ENCODE measurements at regions of chr1 and their contacts with region 1.

Region 1: GRCh38 chr1:245337829-245338484 is 183.2 kb downstream of the KIF26B start:
- DNase-seq: no peak
- H3K4me3 ChIP-seq: no peak overlapping the region
- H3K27ac ChIP-seq: no peak overlapping the region
- H3K4me1 ChIP-seq: no peaks in the 10 kb centered on the region
- H3K27me3 ChIP-seq: no peaks in the 10 kb centered on the region
- CTCF ChIP-seq: no peak

Region 2: DNA sequence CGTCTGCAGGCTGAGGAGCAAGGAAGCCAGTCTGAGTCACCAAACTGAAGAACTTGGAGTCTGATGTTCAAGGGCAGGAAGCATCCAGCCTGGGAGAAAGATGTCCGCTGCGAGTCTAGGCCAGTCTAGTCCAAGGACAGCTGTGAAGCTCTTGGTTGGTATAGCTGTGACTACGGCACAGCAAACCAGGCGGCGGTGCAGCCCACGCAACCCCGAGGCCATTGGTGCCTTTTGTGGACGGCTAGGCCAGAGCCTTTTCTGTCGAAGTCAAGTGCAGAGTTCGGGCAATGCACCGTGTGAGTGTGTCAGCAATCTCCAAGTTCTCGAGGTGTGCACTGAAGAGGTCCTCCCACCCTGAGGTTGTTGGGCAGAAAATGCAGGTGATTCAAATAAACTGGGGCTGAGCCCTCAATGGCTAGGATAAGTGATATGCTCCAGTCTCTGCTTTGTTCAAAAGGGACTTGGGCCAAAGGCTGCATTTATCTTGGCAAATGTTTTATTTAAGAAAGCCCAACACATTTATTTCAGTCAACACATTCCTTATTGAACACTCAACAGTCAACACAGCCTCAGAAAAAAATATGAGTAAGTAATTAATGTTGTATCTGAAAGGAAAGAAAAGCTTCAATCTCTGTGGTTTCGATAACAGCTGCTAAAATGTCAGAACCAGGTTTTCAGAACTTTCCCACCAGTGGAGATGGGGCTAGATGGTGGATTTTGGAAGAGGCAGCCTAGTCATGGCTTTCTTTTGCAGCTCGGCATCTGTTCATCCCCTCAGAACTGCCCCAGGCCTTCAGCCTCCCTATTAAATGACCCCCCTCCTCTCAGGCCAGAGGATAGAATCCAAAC is 580.6 kb before region 1 on chr1:
- CTCF ChIA-PET with region 1: no interaction called
- POLR2A ChIA-PET with region 1: no interaction called
- intact Hi-C with region 1: no loop called
- DNase-seq: no peak
- H3K4me3 ChIP-seq: no peak overlapping the region
- H3K27ac ChIP-seq: no peak overlapping the region
- H3K4me1 ChIP-seq: no peaks in the 10 kb centered on the region
- H3K27me3 ChIP-seq: no peaks in the 10 kb centered on the region
- CTCF ChIP-seq: no peak

Region 3: GRCh38 chr1:245216366-245217115 is 121.4 kb before region 1 on chr1:
- CTCF ChIA-PET with region 1: no interaction called
- POLR2A ChIA-PET with region 1: no interaction called
- intact Hi-C with region 1: no loop called
- DNase-seq: peak; percentile 44
- H3K4me3 ChIP-seq: no peak overlapping the region
- H3K27ac ChIP-seq: no peak overlapping the region
- H3K4me1 ChIP-seq: peaks cover 3% of the 10 kb centered on the region
- H3K27me3 ChIP-seq: no peaks in the 10 kb centered on the region
- CTCF ChIP-seq: no peak

Region 4: GRCh38 chr1:245585252-245585959 is 247.4 kb after region 1 on chr1:
- CTCF ChIA-PET with region 1: no interaction called
- POLR2A ChIA-PET with region 1: no interaction called
- intact Hi-C with region 1: no loop called
- DNase-seq: no peak
- H3K4me3 ChIP-seq: no peak overlapping the region
- H3K27ac ChIP-seq: no peak overlapping the region
- H3K4me1 ChIP-seq: no peaks in the 10 kb centered on the region
- H3K27me3 ChIP-seq: peaks cover 26% of the 10 kb centered on the region
- CTCF ChIP-seq: no peak

Region 5: GRCh38 chr1:245786948-245787347 is 449.0 kb after region 1 on chr1:
- CTCF ChIA-PET with region 1: no interaction called
- POLR2A ChIA-PET with region 1: interaction called, 18 read pairs
- intact Hi-C with region 1: no loop called
- DNase-seq: no peak
- H3K4me3 ChIP-seq: no peak overlapping the region
- H3K27ac ChIP-seq: no peak overlapping the region
- H3K4me1 ChIP-seq: no peaks in the 10 kb centered on the region
- H3K27me3 ChIP-seq: no peaks in the 10 kb centered on the region
- CTCF ChIP-seq: no peak